GM23248 (cell line): ENCODE measurements at regions of chr19 and their contacts with region 1.

Region 1: GRCh38 chr19:2084993-2085720 is 11.0 kb downstream of the MOB3A start:
- DNase-seq: peak; percentile 79
- H3K4me3 ChIP-seq: 0 out of 2 replicates have a peak overlapping the region, but pooled peaks have one; percentile 1
- H3K27ac ChIP-seq: peak overlapping the region; percentile 59
- H3K4me1 ChIP-seq: peaks cover 25% of the 10 kb centered on the region
- H3K27me3 ChIP-seq: no peaks in the 10 kb centered on the region

Region 2: DNA sequence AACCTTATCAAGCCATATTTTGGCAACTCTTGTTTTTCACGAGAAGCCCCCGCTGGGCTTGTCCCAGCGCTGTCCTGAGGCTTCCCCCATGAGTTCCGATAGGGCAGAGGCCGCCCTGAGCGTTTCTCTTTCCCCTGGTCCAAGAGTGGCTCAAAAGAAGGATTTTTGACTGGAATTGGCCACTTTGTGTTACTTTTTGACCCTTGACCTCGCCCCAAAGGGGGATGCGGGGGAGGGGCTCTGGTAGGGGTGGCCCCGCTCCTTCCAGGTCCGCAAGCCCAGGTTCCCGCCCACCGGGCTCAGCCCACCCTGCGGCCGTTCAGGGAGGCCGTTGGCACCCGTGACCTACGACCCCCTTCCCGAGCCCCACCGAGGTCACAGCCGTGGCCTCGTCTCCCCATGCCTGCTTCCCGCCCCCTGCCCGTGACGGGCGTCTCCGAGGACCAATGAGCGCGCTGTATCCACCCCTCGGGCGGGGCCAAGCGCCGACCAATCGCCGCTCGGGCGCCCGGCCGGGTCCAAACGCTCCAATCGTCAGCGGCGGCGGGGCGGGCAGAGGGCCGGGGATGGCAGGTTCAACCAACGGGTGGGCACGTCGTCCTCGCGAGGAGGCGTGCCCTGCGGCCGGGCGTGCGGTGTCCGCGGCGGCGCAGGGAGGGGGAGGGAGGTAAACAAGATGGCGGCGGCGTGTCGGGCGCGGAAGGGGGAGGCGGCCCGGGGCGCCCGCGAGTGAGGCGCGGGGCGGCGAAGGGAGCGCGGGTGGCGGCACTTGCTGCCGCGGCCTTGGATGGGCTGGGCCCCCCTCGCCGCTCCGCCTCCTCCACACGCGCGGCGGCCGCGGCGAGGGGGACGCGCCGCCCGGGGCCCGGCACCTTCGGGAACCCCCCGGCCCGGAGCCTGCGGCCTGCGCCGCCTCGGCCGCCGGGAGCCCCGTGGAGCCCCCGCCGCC is 879.8 kb before region 1 on chr19 and contains the start of gene STK11:
- in situ Hi-C with region 1: no loop called
- DNase-seq: peak; percentile 100
- H3K4me3 ChIP-seq: peak within 1 kb of the TSS; percentile 88
- H3K27ac ChIP-seq: peak within 1 kb of the TSS; percentile 64
- H3K4me1 ChIP-seq: peaks cover 11% of the 10 kb centered on the region
- H3K27me3 ChIP-seq: no peaks in the 10 kb centered on the region
- total RNA-seq, gene STK11: 64.1 and 66.5 TPM in 2 replicates

Region 3: DNA sequence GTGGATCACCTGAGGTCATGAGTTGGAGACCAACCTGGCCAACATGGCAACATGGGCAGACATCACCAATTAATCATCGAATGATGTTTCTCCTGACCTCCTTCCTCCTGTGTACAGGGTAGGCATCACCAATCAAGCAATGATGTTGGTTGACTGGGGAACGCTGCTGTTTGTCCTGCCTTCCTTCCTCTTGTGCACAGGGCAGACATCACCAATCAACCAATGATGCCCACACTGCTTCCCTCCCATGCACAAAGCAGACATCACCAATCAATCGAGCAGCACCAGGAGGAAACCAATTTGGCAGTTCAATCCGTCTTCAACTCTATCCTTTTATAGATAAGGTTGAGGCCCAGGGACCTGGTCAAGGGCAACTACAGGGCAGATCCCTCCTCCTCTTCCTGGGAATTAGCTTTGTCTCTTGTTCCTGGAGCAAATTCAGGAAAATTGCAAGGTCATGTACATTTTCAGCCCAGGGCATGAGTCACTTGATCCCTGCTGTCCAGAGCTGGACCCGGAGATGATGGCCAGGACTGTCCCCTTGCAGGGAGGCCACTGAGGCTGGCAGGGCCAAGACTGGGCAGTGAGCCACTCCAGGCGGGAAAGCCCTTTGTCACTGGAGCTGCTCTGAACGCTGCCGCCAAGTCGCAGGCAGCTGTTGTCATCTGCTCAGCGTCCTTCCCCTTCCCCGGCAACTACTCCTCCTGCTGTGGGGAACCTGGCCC is 149.5 kb before region 1 on chr19:
- in situ Hi-C with region 1: loop called (anchors 10 kb)
- DNase-seq: peak; percentile 27
- H3K4me3 ChIP-seq: no peak overlapping the region
- H3K27ac ChIP-seq: no peak overlapping the region
- H3K4me1 ChIP-seq: peaks cover 9% of the 10 kb centered on the region
- H3K27me3 ChIP-seq: no peaks in the 10 kb centered on the region

Region 4: DNA sequence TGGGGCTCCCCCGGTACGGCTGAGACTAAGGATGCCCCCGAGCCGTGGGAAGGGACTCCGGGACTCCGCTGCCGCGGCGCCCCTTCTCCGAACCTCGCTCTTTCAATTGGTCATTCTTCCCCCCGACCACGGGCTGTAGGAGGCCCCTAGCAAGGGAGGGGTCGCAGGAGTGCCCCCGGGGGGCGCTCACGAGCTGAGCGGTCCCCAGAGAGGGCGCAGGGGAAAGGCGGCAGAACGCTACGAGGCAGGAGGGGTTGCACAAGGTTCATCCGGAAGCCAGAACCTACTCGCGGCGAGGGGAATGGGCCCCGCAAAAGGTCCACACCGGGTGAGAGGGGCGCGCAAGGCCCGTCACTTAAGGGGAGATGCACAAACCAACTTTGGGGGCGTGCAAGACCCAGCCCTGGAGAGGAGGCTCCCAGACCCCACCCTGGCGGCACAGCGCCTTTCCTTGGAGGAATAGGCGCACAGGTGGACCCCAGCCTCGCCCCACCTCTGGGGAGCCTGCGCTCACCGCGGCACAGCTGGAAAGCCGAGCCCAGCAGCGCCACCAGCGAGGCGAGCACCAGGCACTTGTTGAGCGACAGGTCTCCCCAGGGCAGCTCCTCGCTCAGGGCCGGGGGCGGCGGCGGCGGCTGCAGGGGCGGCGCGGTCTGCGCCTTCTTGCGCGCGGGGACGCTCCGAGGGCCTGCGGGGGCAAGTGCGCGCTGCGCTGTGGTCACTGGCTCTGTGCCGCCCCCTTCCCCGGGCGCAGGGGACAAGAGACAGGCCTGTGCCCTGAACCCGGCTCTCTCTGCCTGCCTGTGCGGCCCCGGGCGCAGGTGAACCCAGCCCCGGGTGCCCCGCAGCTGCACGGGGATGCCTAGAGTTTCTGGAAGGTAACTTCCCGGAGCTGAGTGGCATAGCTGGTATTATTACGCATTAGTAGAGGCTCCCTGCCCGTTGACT is 168.2 kb after region 1 on chr19:
- in situ Hi-C with region 1: no loop called
- DNase-seq: no peak
- H3K4me3 ChIP-seq: no peak overlapping the region
- H3K27ac ChIP-seq: no peak overlapping the region
- H3K4me1 ChIP-seq: no peaks in the 10 kb centered on the region
- H3K27me3 ChIP-seq: peaks cover 26% of the 10 kb centered on the region